AG04450 (cell line): ENCODE measurements at regions of chr16 and their contacts with region 1.

Region 1: DNA sequence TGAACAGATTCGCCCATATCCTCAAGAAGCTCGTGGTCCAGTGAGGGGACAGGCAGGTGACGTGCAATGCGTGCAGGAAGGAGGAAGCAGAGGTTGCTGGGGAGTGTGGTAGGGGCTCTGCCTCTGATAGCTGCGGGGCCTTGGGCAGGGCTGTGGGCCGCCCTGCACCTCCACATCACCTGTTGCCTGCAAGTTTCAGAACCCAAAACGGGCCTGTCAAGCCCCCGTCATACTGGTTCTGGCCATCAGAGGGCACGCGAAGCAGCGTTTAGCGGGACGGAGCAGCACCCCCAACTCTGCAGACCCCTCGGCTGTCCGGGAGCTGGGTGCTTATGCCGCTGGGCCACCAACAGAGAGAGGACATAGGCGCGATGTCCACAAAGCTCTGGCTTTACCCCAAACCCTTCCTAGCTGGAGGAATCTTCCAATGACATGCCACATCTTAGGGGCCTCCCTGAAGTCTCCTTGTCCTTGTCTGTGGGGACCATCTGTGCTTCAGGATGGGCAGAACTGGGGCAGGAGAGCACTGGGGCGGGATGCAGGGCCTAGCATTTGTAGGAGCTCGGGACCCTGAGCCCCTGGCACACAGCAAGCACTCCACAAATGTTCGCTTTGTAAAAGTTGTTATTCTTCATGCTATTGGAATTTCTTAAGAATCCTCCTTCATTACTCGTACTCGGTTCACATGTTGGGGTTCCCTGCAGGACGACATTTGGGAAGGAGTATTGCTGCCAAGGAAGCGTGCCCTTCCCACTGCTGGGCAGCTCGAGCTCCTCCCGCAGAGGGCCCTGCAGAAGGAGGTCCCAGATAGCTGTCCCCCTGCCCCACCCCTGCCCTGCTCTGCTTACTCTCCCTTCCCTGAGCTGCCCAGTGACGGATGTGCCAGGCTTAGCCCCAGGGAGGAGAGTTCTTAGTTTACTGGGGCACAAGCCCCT is 64.3 kb downstream of the CNGB1 start:
- DNase-seq: no peak
- H3K4me3 ChIP-seq: no peak overlapping the region
- H3K27ac ChIP-seq: no peak overlapping the region
- H3K27me3 ChIP-seq: peaks cover 41% of the 10 kb centered on the region
- CTCF ChIP-seq: peak; percentile 57

Region 2: DNA sequence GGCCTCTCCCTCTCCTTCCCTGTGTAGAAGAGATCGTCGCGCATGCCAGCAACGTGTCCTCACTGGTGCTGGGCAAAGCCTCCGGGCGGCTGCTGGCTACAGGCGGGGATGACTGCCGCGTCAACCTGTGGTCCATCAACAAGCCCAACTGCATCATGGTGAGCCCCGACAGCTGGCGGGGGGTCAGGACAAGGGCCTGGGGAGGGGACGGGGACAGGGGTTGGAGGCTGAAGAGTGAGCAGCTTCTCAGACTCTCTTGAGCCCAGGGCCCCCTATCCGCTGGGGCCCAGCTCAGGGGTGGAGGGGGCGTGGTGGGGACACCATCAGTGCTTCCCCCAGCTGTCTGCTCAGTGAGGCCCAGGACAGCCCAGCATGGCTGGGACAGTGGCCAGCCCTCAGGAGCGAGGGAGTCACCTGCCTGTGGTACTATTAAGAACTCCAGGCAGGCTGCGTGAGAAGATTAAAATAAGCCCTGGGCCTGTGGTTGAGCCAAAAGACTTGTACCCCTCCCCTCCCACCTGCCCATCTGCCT is 164.9 kb before region 1 on chr16:
- CTCF ChIA-PET with region 1: no interaction called
- POLR2A ChIA-PET with region 1: no interaction called
- DNase-seq: no peak
- H3K4me3 ChIP-seq: no peak overlapping the region
- H3K27ac ChIP-seq: no peak overlapping the region
- H3K27me3 ChIP-seq: no peaks in the 10 kb centered on the region
- CTCF ChIP-seq: no peak

Region 3: GRCh38 chr16:57871456-57871855 is 35.2 kb before region 1 on chr16:
- CTCF ChIA-PET with region 1: no interaction called
- POLR2A ChIA-PET with region 1: no interaction called
- DNase-seq: no peak
- H3K4me3 ChIP-seq: no peak overlapping the region
- H3K27ac ChIP-seq: no peak overlapping the region
- H3K27me3 ChIP-seq: peaks cover 4% of the 10 kb centered on the region
- CTCF ChIP-seq: no peak

Region 4: GRCh38 chr16:58000706-58001676 is 94.3 kb after region 1 on chr16 and contains the start of gene USB1:
- CTCF ChIA-PET with region 1: interaction called, 47 read pairs
- POLR2A ChIA-PET with region 1: no interaction called
- DNase-seq: peak; percentile 39
- H3K4me3 ChIP-seq: peak within 1 kb of the TSS; percentile 89
- H3K27ac ChIP-seq: peak within 1 kb of the TSS; percentile 47
- H3K27me3 ChIP-seq: no peaks in the 10 kb centered on the region
- CTCF ChIP-seq: peak; percentile 52
- polyA plus RNA-seq, gene USB1: 48.7 and 57.9 TPM in 2 replicates

Region 5: GRCh38 chr16:58366247-58367031 is 459.8 kb after region 1 on chr16:
- CTCF ChIA-PET with region 1: interaction called, 11 read pairs
- POLR2A ChIA-PET with region 1: no interaction called
- DNase-seq: no peak
- H3K4me3 ChIP-seq: no peak overlapping the region
- H3K27ac ChIP-seq: no peak overlapping the region
- H3K27me3 ChIP-seq: peaks cover 6% of the 10 kb centered on the region
- CTCF ChIP-seq: no peak